Activated T-helper 1 cell treated with anti-CD3 and anti-CD28 coated beads, Interleukin-12 subunit alpha, Interleukin-12 subunit beta, Interleukin-2, Interleukin-4 antibody, amounts not matched to agents 30 ng/mL and 10 ng/mL and 1 ng/mL, durations not matched to agents 14 hours and 24 hours and 36 hours (primary cell): ENCODE measurements at regions of chr6 and their contacts with region 1.

Region 1: DNA sequence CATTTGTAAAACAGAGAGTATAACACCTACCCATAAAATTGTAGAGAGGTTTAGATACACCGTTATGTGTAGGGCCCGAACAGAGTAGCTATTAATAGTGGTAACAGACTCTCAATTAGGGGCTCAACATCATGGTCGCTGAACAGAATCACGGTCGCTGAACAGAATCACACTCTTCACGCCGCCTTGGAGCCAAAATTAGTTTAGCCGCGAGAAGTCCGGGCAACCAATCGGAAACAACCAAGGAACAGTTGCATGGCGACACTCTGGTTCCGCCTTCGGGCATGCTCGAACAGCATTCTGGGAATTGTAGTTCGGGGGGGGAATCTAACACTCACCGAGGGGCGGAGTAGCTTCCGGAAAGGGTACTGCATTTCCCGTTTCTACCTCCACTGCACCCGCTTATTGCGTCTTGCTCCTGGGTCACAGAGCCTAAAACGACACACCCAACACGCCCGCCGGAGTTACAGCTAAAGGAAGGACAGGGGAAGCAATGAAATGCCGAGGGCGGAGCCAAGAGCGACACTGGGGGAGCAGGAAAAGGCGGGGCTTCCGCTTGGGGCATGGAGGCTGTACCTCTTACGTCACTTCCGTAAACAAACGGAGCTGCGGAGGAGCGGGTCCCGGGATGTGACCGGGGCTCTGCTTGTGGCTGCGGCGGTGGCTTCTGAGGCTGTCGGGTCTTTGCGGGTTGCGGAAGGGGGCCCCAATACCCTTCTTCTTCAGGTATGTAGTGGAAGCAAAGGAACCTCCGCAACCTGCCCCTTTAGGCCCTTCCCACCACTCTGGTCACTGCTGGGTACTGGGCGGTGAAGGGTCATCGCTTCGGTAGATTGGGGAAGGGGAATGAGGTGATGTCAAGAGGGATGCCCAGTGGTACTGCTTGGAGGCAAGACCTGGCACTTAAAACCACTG is at the start of gene CCDC28A:
- DNase-seq: peak; percentile 89
- H3K4me3 Mint-ChIP-seq: peak within 1 kb of the TSS; percentile 99
- H3K27ac Mint-ChIP-seq: peak within 1 kb of the TSS; percentile 100
- H3K4me1 Mint-ChIP-seq: peaks cover 23% of the 10 kb centered on the region
- H3K27me3 Mint-ChIP-seq: no peaks in the 10 kb centered on the region
- total RNA-seq, gene CCDC28A: 16.1 and 17.9 TPM in 2 replicates

Region 2: GRCh38 chr6:137717074-137718073 is 1056.1 kb before region 1 on chr6:
- intact Hi-C with region 1: loop called (anchors 5 kb)
- DNase-seq: peak; percentile 81
- H3K4me3 Mint-ChIP-seq: peak overlapping the region; percentile 59
- H3K27ac Mint-ChIP-seq: peak overlapping the region; percentile 90
- H3K4me1 Mint-ChIP-seq: peaks cover 66% of the 10 kb centered on the region
- H3K27me3 Mint-ChIP-seq: peaks cover 5% of the 10 kb centered on the region

Region 3: GRCh38 chr6:138004423-138005287 is 768.8 kb before region 1 on chr6:
- intact Hi-C with region 1: no loop called
- DNase-seq: no peak
- H3K4me3 Mint-ChIP-seq: no peak overlapping the region
- H3K27ac Mint-ChIP-seq: no peak overlapping the region
- H3K4me1 Mint-ChIP-seq: peaks cover 26% of the 10 kb centered on the region
- H3K27me3 Mint-ChIP-seq: peaks cover 6% of the 10 kb centered on the region

Region 4: GRCh38 chr6:138403801-138404661 is 369.4 kb before region 1 on chr6 and contains the start of gene HEBP2:
- intact Hi-C with region 1: loop called (anchors 1 kb)
- DNase-seq: peak; percentile 87
- H3K4me3 Mint-ChIP-seq: peak within 1 kb of the TSS; percentile 84
- H3K27ac Mint-ChIP-seq: peak within 1 kb of the TSS; percentile 59
- H3K4me1 Mint-ChIP-seq: peaks cover 18% of the 10 kb centered on the region
- H3K27me3 Mint-ChIP-seq: peaks cover 8% of the 10 kb centered on the region
- total RNA-seq, gene HEBP2: 18.9 and 21.4 TPM in 2 replicates